ENCODE measurements at regions of chr19 and their contacts with region 1.

Region 1: GRCh38 chr19:45079063-45079910 is at the start of gene GEMIN7:
- DNase-seq: no peak
- total RNA-seq, gene GEMIN7: 10.7 TPM

Region 2: GRCh38 chr19:44611812-44612295 is 467.4 kb before region 1 on chr19:
- intact Hi-C with region 1: no loop called
- DNase-seq: no peak

Region 3: GRCh38 chr19:44984005-44984404 is 95.3 kb before region 1 on chr19:
- intact Hi-C with region 1: no loop called
- DNase-seq: no peak

Region 4: DNA sequence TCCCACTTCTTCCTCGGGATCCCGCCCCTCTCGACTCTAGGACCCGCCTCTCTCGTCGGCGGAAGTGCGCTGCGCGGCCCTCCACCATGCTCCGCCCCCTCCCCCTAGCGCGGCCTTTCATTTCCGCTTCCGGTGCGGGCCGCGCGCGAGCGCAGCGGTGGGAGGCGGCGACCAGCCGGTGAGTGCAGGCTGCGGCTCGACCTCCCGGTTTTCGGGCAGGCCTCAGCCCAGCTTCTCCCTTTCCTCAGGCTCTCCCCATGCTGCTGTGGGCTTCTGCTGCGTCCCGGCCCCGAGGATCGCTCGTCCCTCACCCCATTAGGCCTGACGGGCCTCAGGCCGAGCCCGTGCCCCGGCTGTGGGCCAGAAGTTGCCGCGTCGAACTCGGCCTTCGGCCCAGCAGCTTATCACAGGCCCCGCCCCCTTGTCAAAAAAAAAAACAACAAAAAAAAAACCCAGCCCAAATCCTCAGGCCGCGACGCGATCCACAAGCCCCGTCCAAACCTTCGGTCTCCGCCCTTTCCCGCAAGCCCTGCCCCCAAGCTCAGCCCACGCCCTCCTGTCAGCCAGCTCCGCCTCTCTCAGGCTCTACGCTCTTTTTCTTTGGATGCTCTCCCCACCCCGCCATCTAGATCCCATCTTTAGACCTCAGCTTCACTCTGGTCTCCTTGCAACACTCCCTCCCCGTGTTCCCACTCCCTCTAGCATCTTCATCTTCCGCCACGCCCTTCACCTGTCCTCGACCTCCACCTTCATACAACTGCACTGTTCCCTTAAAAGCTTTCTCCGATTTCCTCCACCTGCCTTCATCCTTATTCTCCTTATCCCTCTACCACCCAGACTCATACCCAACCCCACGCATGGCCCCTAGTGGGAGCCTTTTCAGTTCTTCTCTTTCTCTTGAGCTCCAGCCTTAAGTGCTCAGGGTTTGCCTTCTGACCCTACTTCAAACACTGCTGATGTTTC is 40.1 kb before region 1 on chr19 and contains the start of gene CLASRP:
- intact Hi-C with region 1: loop called (anchors 5 kb)
- DNase-seq: peak; percentile 97
- total RNA-seq, gene CLASRP: 45.6 TPM

Region 5: GRCh38 chr19:45178262-45179071 is 99.2 kb after region 1 on chr19 and contains the start of gene BLOC1S3:
- intact Hi-C with region 1: loop called (anchors 5 kb)
- DNase-seq: peak; percentile 100
- total RNA-seq, gene BLOC1S3: 5.0 TPM

Region 6: DNA sequence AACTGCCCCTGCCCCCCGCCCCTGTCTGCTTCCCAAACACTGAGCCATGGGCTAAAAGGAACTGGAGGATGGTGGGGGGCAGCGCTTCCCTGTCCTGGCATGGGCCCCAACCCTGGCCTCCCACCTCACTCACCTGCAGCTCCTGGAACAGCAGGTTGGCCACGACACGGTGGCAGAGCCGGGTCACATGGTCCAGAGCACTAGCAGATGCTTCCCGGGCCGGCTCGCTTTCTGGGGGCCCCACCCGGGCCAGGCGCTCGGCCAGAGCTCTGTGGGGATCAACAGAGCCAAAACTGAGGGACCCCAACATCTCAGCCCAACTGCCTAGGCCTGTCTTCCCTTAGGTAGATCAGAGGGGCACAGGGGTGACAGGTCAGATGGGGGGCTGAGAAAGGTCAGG is 145.4 kb after region 1 on chr19:
- intact Hi-C with region 1: no loop called
- DNase-seq: no peak

Measured in cardiac septum (tissue), 1 donor.